Esophagus muscularis mucosa (tissue), 4 donors: ENCODE measurements at regions of chrX and their contacts with region 1.

Region 1: GRCh38 chrX:140057001-140057411 is 91.7 kb upstream of the CXorf66 start:
- DNase-seq: no peak
- H3K4me3 ChIP-seq: no peak overlapping the region
- H3K27ac ChIP-seq: no peak overlapping the region
- H3K4me1 ChIP-seq: peaks cover 0 to 4% (median 0%) of the 10 kb centered on the region in 4 donors
- H3K27me3 ChIP-seq: peaks cover 0 to 4% (median 0%) of the 10 kb centered on the region in 4 donors
- CTCF ChIP-seq: peak; percentile 61 to 73 (median 72)
- EP300 ChIP-seq: no peak
- POLR2A ChIP-seq: no peak

Region 2: GRCh38 chrX:139844163-139844562 is 212.8 kb before region 1 on chrX:
- intact Hi-C with region 1: no loop called
- DNase-seq: no peak
- H3K4me3 ChIP-seq: no peak overlapping the region
- H3K27ac ChIP-seq: no peak overlapping the region
- H3K4me1 ChIP-seq: peaks cover 0 to 7% (median 2%) of the 10 kb centered on the region in 4 donors
- H3K27me3 ChIP-seq: no peaks in the 10 kb centered on the region
- CTCF ChIP-seq: no peak
- EP300 ChIP-seq: no peak
- POLR2A ChIP-seq: no peak

Region 3: DNA sequence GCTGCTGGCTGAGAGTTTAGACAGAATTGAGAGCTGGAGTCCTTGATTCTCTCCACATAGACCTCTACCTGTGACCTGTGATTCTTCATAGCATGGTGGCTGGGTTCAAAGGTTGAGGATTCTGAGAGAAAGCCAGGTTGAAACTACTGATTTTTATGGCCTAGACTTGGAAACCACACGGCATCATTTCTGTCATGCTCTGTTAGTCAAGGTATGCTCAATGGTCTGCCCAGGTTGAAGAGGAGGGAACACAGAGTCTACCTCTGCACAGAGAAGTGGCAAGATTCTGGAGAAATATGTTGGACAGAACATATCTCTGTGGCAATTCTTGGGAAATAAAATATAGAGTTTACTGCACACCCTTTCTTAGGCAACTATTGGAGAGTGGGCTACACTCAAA is 34.5 kb before region 1 on chrX:
- intact Hi-C with region 1: no loop called
- DNase-seq: no peak
- H3K4me3 ChIP-seq: no peak overlapping the region
- H3K27ac ChIP-seq: no peak overlapping the region
- H3K4me1 ChIP-seq: no peaks in the 10 kb centered on the region
- H3K27me3 ChIP-seq: no peaks in the 10 kb centered on the region
- CTCF ChIP-seq: no peak
- EP300 ChIP-seq: no peak
- POLR2A ChIP-seq: no peak

Region 4: GRCh38 chrX:140141444-140142029 is 84.5 kb after region 1 on chrX:
- intact Hi-C with region 1: loop called (anchors 2 kb)
- DNase-seq: no peak
- H3K4me3 ChIP-seq: no peak overlapping the region
- H3K27ac ChIP-seq: no peak overlapping the region
- H3K4me1 ChIP-seq: no peaks in the 10 kb centered on the region
- H3K27me3 ChIP-seq: no peaks in the 10 kb centered on the region
- CTCF ChIP-seq: peak; percentile 51 to 61 (median 59)
- EP300 ChIP-seq: no peak
- POLR2A ChIP-seq: no peak

Region 5: DNA sequence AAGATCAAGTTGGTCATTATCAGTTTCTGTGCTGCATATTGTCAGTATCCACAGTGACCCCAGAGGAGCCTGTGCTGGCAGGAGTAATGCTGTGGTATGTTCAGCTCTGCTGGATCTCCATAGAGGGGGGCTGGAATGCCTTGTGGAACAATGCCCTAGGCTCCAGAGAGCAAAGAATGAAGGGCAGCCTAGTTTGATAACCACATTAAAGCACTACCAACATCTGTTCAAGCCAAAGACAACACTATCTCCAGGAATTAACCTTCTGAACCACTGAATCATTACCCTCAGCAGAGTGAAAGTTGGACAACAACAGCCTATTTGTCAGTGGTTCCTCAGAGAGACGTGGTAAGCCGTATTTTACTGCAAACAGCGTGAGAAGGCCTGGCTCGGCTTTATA is 100.6 kb after region 1 on chrX:
- intact Hi-C with region 1: no loop called
- DNase-seq: no peak
- H3K4me3 ChIP-seq: no peak overlapping the region
- H3K27ac ChIP-seq: no peak overlapping the region
- H3K4me1 ChIP-seq: no peaks in the 10 kb centered on the region
- H3K27me3 ChIP-seq: no peaks in the 10 kb centered on the region
- CTCF ChIP-seq: no peak
- EP300 ChIP-seq: no peak
- POLR2A ChIP-seq: no peak

Region 6: GRCh38 chrX:140664939-140665338 is 607.9 kb after region 1 on chrX:
- intact Hi-C with region 1: loop called (anchors 10 kb)
- DNase-seq: no peak
- H3K4me3 ChIP-seq: no peak overlapping the region
- H3K27ac ChIP-seq: no peak overlapping the region
- H3K4me1 ChIP-seq: no peaks in the 10 kb centered on the region
- H3K27me3 ChIP-seq: no peaks in the 10 kb centered on the region
- CTCF ChIP-seq: peak in 2 of 3 experiments; percentile 22 to 29
- EP300 ChIP-seq: no peak
- POLR2A ChIP-seq: no peak